Dorsolateral prefrontal cortex (tissue), 120 donors: ENCODE measurements at regions of chr16 and their contacts with region 1.

Region 1: GRCh38 chr16:67183627-67184328 is at the start of gene MATCAP1:
- DNase-seq: peak; percentile 79 to 96 (median 96)
- H3K4me3 ChIP-seq: peak within 1 kb of the TSS; percentile 59 to 99 (median 81)
- H3K27ac ChIP-seq: peak within 1 kb of the TSS; percentile 69 to 99 (median 96)
- H3K27me3 ChIP-seq: no peaks in the 10 kb centered on the region
- CTCF ChIP-seq: peak in 19 of 56 donors; percentile 5 to 46 (median 16)
- total RNA-seq, gene MATCAP1: 51.2 to 112 (median 73.4) TPM

Region 2: GRCh38 chr16:66954097-66954659 is 229.6 kb before region 1 on chr16:
- intact Hi-C with region 1: loop called in 1 of 2 experiments (anchors 5 kb)
- DNase-seq: peak in 9 of 10 donors; percentile 62 to 88 (median 77)
- H3K4me3 ChIP-seq: no peak overlapping the region
- H3K27ac ChIP-seq: no peak overlapping the region
- H3K27me3 ChIP-seq: no peaks in the 10 kb centered on the region
- CTCF ChIP-seq: peak; percentile 58 to 90 (median 80)

Region 3: GRCh38 chr16:67055712-67056487 is 127.9 kb before region 1 on chr16:
- intact Hi-C with region 1: no loop called
- DNase-seq: no peak
- H3K4me3 ChIP-seq: no peak overlapping the region
- H3K27ac ChIP-seq: peak overlapping the region in 53 of 59 donors; percentile 0 to 83 (median 51)
- H3K27me3 ChIP-seq: no peaks in the 10 kb centered on the region
- CTCF ChIP-seq: no peak

Region 4: GRCh38 chr16:67226804-67227557 is 43.2 kb after region 1 on chr16 and contains the start of gene TMEM208:
- intact Hi-C with region 1: no loop called
- DNase-seq: peak; percentile 94 to 98 (median 97)
- H3K4me3 ChIP-seq: peak within 1 kb of the TSS; percentile 61 to 100 (median 97)
- H3K27ac ChIP-seq: peak within 1 kb of the TSS in 54 of 59 donors; percentile 17 to 94 (median 78)
- H3K27me3 ChIP-seq: no peaks in the 10 kb centered on the region
- CTCF ChIP-seq: peak in 49 of 56 donors; percentile 3 to 63 (median 43)
- total RNA-seq, gene TMEM208: 16.2 to 40.3 (median 28.1) TPM

Region 5: GRCh38 chr16:67246934-67247697 is 63.3 kb after region 1 on chr16 and contains the start of gene FHOD1:
- intact Hi-C with region 1: no loop called
- DNase-seq: peak; percentile 85 to 97 (median 95)
- H3K4me3 ChIP-seq: peak within 1 kb of the TSS; percentile 51 to 87 (median 75)
- H3K27ac ChIP-seq: peak within 1 kb of the TSS in 55 of 59 donors; percentile 17 to 88 (median 75)
- H3K27me3 ChIP-seq: no peaks in the 10 kb centered on the region
- CTCF ChIP-seq: peak in 10 of 56 donors; percentile 10 to 36 (median 21)
- total RNA-seq, gene FHOD1: 5.4 to 26.6 (median 13.7) TPM